Activated T-helper 1 cell treated with anti-CD3 and anti-CD28 coated beads, Interleukin-12 subunit alpha, Interleukin-12 subunit beta, Interleukin-2, Interleukin-4 antibody, amounts not matched to agents 30 ng/mL and 10 ng/mL and 1 ng/mL, durations not matched to agents 14 hours and 24 hours and 36 hours (primary cell): ENCODE measurements at regions of chr1 and their contacts with region 1.

Region 1: GRCh38 chr1:43367904-43368645 is at the start of gene ELOVL1:
- DNase-seq: peak; percentile 85
- H3K4me3 Mint-ChIP-seq: peak within 1 kb of the TSS; percentile 92
- H3K27ac Mint-ChIP-seq: peak within 1 kb of the TSS; percentile 86
- H3K4me1 Mint-ChIP-seq: peaks cover 43% of the 10 kb centered on the region
- H3K27me3 Mint-ChIP-seq: no peaks in the 10 kb centered on the region
- total RNA-seq, gene ELOVL1: 81.8 and 85.7 TPM in 2 replicates

Region 2: GRCh38 chr1:42846257-42847110 is 521.6 kb before region 1 on chr1 and contains the start of gene ZNF691:
- intact Hi-C with region 1: loop called (anchors 10 kb)
- DNase-seq: peak; percentile 86
- H3K4me3 Mint-ChIP-seq: peak within 1 kb of the TSS; percentile 97
- H3K27ac Mint-ChIP-seq: peak within 1 kb of the TSS; percentile 78
- H3K4me1 Mint-ChIP-seq: peaks cover 41% of the 10 kb centered on the region
- H3K27me3 Mint-ChIP-seq: no peaks in the 10 kb centered on the region
- total RNA-seq, gene ZNF691: 10.0 and 12.9 TPM in 2 replicates

Region 3: GRCh38 chr1:43227143-43227764 is 140.8 kb before region 1 on chr1:
- intact Hi-C with region 1: loop called (anchors 1 kb)
- DNase-seq: peak; percentile 67
- H3K4me3 Mint-ChIP-seq: no peak overlapping the region
- H3K27ac Mint-ChIP-seq: no peak overlapping the region
- H3K4me1 Mint-ChIP-seq: no peaks in the 10 kb centered on the region
- H3K27me3 Mint-ChIP-seq: peaks cover 6% of the 10 kb centered on the region

Region 4: DNA sequence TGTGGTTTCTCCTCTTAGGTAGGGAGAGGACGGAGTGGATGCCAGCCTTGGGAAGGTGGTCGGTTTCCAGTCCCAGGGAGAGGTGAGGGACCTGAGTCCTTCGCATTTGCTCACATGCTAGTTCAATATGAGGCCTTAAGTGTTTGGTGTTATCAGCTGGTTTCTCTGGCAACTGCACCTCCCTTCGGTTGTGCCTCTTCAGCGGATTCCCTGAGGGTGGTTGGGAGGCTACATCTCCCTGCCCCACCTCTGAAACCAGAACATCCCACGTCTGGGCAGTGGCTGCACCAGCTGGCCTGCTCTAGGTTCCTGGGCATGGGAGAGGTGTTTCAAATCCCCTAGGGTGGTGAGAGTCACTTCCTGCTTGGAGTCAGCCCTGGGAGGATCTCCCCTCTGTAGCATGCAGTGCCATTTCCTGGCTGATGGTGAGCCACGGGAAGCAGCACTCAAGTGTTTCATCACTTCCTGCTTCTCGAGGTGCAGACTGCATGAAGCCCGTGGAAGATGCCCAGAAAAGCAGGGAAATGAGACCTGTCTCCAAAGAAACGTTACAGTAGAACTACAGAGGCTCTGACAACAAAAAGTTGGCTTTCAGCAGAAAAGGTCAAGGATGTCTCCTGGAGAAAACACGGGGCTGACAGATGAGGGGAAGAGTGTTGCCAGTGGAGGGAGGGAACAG is 93.8 kb before region 1 on chr1:
- intact Hi-C with region 1: loop called (anchors 5 kb)
- DNase-seq: peak; percentile 32
- H3K4me3 Mint-ChIP-seq: peak overlapping the region; percentile 20
- H3K27ac Mint-ChIP-seq: peak overlapping the region; percentile 96
- H3K4me1 Mint-ChIP-seq: peaks cover 30% of the 10 kb centered on the region
- H3K27me3 Mint-ChIP-seq: peaks cover 15% of the 10 kb centered on the region

Region 5: GRCh38 chr1:43348809-43349583 is 19.1 kb before region 1 on chr1:
- intact Hi-C with region 1: no loop called
- DNase-seq: peak; percentile 48
- H3K4me3 Mint-ChIP-seq: peak overlapping the region; percentile 62
- H3K27ac Mint-ChIP-seq: peak overlapping the region; percentile 80
- H3K4me1 Mint-ChIP-seq: peaks cover 29% of the 10 kb centered on the region
- H3K27me3 Mint-ChIP-seq: peaks cover 6% of the 10 kb centered on the region

Region 6: GRCh38 chr1:43389326-43390313 is 21.5 kb after region 1 on chr1 and contains the starts of genes MED8 and SZT2:
- intact Hi-C with region 1: loop called (anchors 1 kb)
- DNase-seq: peak; percentile 93
- H3K4me3 Mint-ChIP-seq: peak within 1 kb of the TSS; percentile 99
- H3K27ac Mint-ChIP-seq: peak within 1 kb of the TSS; percentile 92
- H3K4me1 Mint-ChIP-seq: peaks cover 40% of the 10 kb centered on the region
- H3K27me3 Mint-ChIP-seq: no peaks in the 10 kb centered on the region
- total RNA-seq, gene MED8: 43.0 and 48.5 TPM in 2 replicates
- total RNA-seq, gene SZT2: 59.2 and 64.5 TPM in 2 replicates

Region 7: GRCh38 chr1:43974443-43975248 is 606.6 kb after region 1 on chr1 and contains the start of gene ATP6V0B:
- intact Hi-C with region 1: loop called (anchors 10 kb)
- DNase-seq: peak; percentile 94
- H3K4me3 Mint-ChIP-seq: peak within 1 kb of the TSS; percentile 85
- H3K27ac Mint-ChIP-seq: peak within 1 kb of the TSS; percentile 89
- H3K4me1 Mint-ChIP-seq: peaks cover 60% of the 10 kb centered on the region
- H3K27me3 Mint-ChIP-seq: peaks cover 1% of the 10 kb centered on the region
- total RNA-seq, gene ATP6V0B: 187 and 195 TPM in 2 replicates